ENCODE measurements at regions of chr9 and their contacts with region 1.

Region 1: GRCh38 chr9:36166101-36166927 is 2.9 kb upstream of the CCIN start:
- DNase-seq: peak; percentile 88
- ATAC-seq: peak; percentile 99
- H3K4me3 ChIP-seq: peak overlapping the region in 4 of 5 experiments; percentile 43 to 63 (median 52)
- H3K4me3 Mint-ChIP-seq: peak overlapping the region; percentile 83
- H3K27ac ChIP-seq: no peak overlapping the region
- H3K27ac Mint-ChIP-seq: peak overlapping the region; percentile 29
- H3K4me1 ChIP-seq: peaks cover 0 to 10% of the 10 kb centered on the region in 2 donors
- H3K4me1 Mint-ChIP-seq: peaks cover 3% of the 10 kb centered on the region
- H3K27me3 ChIP-seq: no peaks in the 10 kb centered on the region
- H3K27me3 Mint-ChIP-seq: peaks cover 2% of the 10 kb centered on the region
- CTCF ChIP-seq: peak; percentile 98

Region 2: DNA sequence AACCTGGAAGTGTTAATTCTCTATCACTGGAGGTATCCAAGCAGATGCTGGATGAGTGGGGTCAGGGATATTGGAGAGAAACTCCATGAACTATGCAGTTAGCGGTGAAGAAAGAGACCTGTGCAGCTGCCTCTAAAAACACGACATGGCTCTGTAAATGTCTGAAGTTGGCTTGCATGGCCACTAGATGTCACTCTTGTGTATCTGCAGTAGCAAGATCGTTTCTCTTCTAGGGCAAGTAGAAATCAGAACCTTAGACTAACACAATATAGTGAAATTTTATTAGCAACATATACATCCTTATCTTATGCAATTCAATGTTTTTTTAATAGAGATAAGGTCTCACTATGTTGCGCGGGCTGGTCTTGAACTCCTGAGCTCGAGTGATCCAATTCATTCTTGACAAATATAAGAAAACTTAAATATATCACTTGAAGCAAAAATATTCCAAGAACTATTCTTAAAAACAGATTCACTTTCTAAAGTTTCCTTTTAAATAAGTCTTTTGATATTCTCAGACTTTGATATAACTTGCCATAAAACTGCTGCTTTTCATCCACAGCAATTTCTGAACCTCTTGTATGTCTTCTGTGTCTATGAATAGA is 211.3 kb before region 1 on chr9:
- CTCF ChIA-PET with region 1: interaction called, 7 read pairs
- POLR2A ChIA-PET with region 1: no interaction called
- intact Hi-C with region 1: loop called (anchors 1 kb)
- DNase-seq: peak; percentile 78
- ATAC-seq: peak; percentile 62
- H3K4me3 ChIP-seq: no peak overlapping the region
- H3K4me3 Mint-ChIP-seq: no peak overlapping the region
- H3K27ac ChIP-seq: no peak overlapping the region
- H3K27ac Mint-ChIP-seq: no peak overlapping the region
- H3K4me1 ChIP-seq: no peaks in the 10 kb centered on the region
- H3K4me1 Mint-ChIP-seq: no peaks in the 10 kb centered on the region
- H3K27me3 ChIP-seq: peaks cover 0 to 12% (median 6%) of the 10 kb centered on the region in 4 experiments
- H3K27me3 Mint-ChIP-seq: peaks cover 35% of the 10 kb centered on the region
- CTCF ChIP-seq: peak; percentile 96

Region 3: GRCh38 chr9:36036780-36037548 is 129.3 kb before region 1 on chr9 and contains the start of gene RECK:
- CTCF ChIA-PET with region 1: interaction called, 6 read pairs
- POLR2A ChIA-PET with region 1: no interaction called
- intact Hi-C with region 1: loop called (anchors 10 kb)
- DNase-seq: peak; percentile 88
- ATAC-seq: peak; percentile 98
- H3K4me3 ChIP-seq: peak within 1 kb of the TSS; percentile 52 to 82 (median 74)
- H3K4me3 Mint-ChIP-seq: peak within 1 kb of the TSS; percentile 88
- H3K27ac ChIP-seq: peak within 1 kb of the TSS in 1 of 2 donors; percentile 55
- H3K27ac Mint-ChIP-seq: peak within 1 kb of the TSS; percentile 76
- H3K4me1 ChIP-seq: peaks cover 19 to 21% of the 10 kb centered on the region in 2 donors
- H3K4me1 Mint-ChIP-seq: peaks cover 25% of the 10 kb centered on the region
- H3K27me3 ChIP-seq: peaks cover 0 to 3% (median 0%) of the 10 kb centered on the region in 4 experiments
- H3K27me3 Mint-ChIP-seq: no peaks in the 10 kb centered on the region
- CTCF ChIP-seq: no peak
- total RNA-seq, gene RECK: 7.7 and 7.9 TPM in 2 replicates

Region 4: DNA sequence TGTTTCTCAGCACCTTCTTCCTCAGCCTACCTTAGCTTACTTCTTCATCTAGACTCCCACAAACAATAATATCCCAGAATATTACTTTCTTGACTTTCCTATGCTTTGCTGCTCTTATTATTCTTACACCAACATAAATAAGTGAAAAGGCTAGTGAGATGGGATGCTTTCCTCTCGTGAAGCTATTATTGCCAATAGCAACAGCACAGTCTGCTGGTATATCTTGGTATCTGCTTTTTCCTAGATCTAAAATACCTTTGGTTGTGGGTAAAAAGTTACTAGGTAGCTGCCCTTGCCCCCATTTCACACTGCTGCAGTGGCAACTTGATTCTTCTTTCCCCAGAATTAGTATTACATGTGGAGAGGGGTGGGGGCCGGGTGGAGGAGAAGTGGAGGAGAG is 55.9 kb before region 1 on chr9:
- CTCF ChIA-PET with region 1: interaction called, 435 read pairs
- POLR2A ChIA-PET with region 1: interaction called, 6 read pairs
- intact Hi-C with region 1: no loop called
- DNase-seq: no peak
- ATAC-seq: no peak
- H3K4me3 ChIP-seq: no peak overlapping the region
- H3K4me3 Mint-ChIP-seq: no peak overlapping the region
- H3K27ac ChIP-seq: no peak overlapping the region
- H3K27ac Mint-ChIP-seq: no peak overlapping the region
- H3K4me1 ChIP-seq: no peaks in the 10 kb centered on the region
- H3K4me1 Mint-ChIP-seq: no peaks in the 10 kb centered on the region
- H3K27me3 ChIP-seq: no peaks in the 10 kb centered on the region
- H3K27me3 Mint-ChIP-seq: no peaks in the 10 kb centered on the region
- CTCF ChIP-seq: no peak

Region 5: GRCh38 chr9:36136272-36136893 is 29.9 kb before region 1 on chr9 and contains the start of gene GLIPR2:
- CTCF ChIA-PET with region 1: interaction called, 50 read pairs
- POLR2A ChIA-PET with region 1: no interaction called
- intact Hi-C with region 1: loop called (anchors 1 kb)
- DNase-seq: peak; percentile 86
- ATAC-seq: peak; percentile 99
- H3K4me3 ChIP-seq: peak within 1 kb of the TSS; percentile 47 to 79 (median 68)
- H3K4me3 Mint-ChIP-seq: peak within 1 kb of the TSS; percentile 96
- H3K27ac ChIP-seq: peak within 1 kb of the TSS; percentile 11 to 75
- H3K27ac Mint-ChIP-seq: peak within 1 kb of the TSS; percentile 93
- H3K4me1 ChIP-seq: peaks cover 38 to 39% of the 10 kb centered on the region in 2 donors
- H3K4me1 Mint-ChIP-seq: peaks cover 50% of the 10 kb centered on the region
- H3K27me3 ChIP-seq: no peaks in the 10 kb centered on the region
- H3K27me3 Mint-ChIP-seq: no peaks in the 10 kb centered on the region
- CTCF ChIP-seq: peak; percentile 17
- total RNA-seq, gene GLIPR2: 13.7 and 15.2 TPM in 2 replicates

Region 6: GRCh38 chr9:36148311-36149051 is 17.8 kb before region 1 on chr9:
- CTCF ChIA-PET with region 1: interaction called, 54 read pairs
- POLR2A ChIA-PET with region 1: no interaction called
- intact Hi-C with region 1: loop called (anchors 1 kb)
- DNase-seq: no peak
- ATAC-seq: no peak
- H3K4me3 ChIP-seq: no peak overlapping the region
- H3K4me3 Mint-ChIP-seq: no peak overlapping the region
- H3K27ac ChIP-seq: no peak overlapping the region
- H3K27ac Mint-ChIP-seq: no peak overlapping the region
- H3K4me1 ChIP-seq: peaks cover 51 to 82% of the 10 kb centered on the region in 2 donors
- H3K4me1 Mint-ChIP-seq: peaks cover 76% of the 10 kb centered on the region
- H3K27me3 ChIP-seq: no peaks in the 10 kb centered on the region
- H3K27me3 Mint-ChIP-seq: no peaks in the 10 kb centered on the region
- CTCF ChIP-seq: no peak